Activated CD8-positive, alpha-beta memory T cell treated with anti-CD3 and anti-CD28 coated beads, Interleukin-2, amount 10 ng/mL, durations not matched to agents 7 days and 5 days (primary cell): ENCODE measurements at regions of chr3 and their contacts with region 1.

Region 1: DNA sequence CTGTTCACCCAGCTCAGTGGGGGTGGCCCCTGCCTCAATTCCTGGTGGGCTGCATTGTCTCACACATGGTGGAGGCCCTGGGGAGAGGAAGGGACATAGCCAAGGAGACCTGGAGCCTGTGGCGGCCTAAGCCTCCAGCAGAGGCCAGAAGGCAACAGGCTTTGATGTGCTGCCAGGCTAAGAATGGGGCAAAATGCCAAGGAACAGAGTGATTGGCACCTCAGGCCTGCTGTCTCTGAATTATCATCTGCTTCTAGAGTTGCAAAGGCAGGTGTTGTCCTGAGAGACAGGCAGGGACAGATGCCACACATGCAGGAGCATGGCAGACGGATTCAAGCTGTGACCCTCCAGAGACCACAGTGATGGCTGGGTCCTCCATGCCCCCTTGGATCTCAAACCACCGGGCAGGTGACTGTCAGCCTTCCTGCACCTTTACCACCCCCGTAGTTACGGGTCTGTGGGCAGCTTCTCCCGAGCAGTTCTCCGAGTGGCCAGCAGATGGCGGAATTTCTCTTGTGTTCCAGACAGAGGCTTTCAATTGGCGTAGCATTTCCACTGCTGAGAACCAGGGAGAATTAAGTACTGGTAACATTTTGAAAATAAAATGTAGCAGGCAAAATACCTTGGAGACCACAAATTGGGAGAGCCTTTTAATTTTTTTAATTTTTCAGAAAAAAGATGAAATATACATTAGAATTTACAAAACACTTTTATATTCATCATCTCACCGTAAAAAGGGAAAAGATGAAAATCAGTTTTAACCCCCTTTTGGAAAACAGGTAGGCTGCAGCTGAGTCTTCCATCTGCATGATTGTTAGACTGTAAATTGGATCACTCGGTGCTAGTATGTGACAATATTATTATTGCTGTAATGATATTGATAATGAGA is 525.5 kb upstream of the CFAP20DC start:
- DNase-seq: peak; percentile 87
- ATAC-seq: peak; percentile 85
- H3K4me3 Mint-ChIP-seq: no peak overlapping the region
- H3K27ac Mint-ChIP-seq: no peak overlapping the region
- H3K4me1 Mint-ChIP-seq: peaks cover 3% of the 10 kb centered on the region
- H3K27me3 Mint-ChIP-seq: no peaks in the 10 kb centered on the region

Region 2: DNA sequence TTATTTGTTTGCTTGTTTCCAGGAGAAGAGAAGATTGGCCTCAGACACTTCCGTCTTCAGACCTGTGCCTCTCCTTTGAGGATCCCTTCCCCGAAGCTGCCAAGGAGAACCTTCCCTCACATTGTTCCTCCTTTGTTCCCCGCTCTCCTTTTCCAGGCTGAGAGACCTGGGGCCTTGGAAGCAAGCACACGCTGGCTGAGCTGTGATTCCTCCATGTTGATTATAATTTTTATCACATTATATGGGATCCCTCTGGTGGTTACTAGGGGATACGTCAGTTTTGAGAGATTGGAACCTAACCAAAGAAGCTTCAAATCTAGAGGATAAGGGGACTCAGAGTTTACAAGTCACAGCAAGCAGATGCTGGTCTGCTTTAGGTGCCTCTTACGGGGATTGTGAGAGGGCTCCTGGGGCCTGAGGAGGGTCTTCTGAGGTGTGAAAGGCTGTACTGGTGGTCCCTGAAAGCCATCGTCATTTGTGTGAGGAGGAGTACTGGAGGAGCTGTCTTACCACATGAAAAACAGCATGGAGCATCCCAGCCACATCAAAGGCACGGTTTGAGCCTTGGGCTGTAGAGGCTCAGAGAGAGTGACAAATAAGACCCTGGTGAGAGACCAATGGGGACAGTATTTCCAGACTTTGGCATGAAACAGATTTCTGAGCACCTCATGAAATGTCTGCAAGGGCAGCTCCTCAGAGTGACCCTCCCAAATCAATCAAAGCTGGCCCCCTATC is 234.5 kb after region 1 on chr3:
- CTCF ChIA-PET with region 1: interaction called, 30 read pairs
- DNase-seq: no peak
- ATAC-seq: no peak
- H3K4me3 Mint-ChIP-seq: no peak overlapping the region
- H3K27ac Mint-ChIP-seq: no peak overlapping the region
- H3K4me1 Mint-ChIP-seq: no peaks in the 10 kb centered on the region
- H3K27me3 Mint-ChIP-seq: no peaks in the 10 kb centered on the region